ENCODE measurements at regions of chr5 and their contacts with region 1.

Region 1: DNA sequence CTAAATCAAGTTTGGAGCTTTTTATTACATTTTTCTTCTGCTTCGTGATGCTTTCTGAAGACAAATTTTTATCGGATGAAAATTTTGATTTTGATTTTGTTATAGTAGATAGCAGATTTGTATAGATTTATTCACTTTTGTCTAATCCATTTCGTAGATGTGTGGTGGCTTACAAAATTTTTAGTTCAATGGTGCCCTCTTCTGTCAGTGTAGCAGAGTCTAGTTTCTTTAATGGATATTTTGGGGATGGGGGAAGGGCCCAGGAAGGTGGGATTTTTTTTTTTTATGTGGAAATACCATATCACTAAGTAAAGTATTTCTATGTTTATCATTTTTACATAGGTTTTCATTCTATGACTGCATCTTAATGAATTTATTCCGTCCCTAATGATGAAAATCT is 259.9 kb upstream of the TARS1 start:
- DNase-seq: peak; percentile 56
- H3K4me3 Mint-ChIP-seq: no peak overlapping the region
- H3K27ac Mint-ChIP-seq: peak overlapping the region; percentile 31
- H3K4me1 Mint-ChIP-seq: no peaks in the 10 kb centered on the region
- H3K27me3 Mint-ChIP-seq: no peaks in the 10 kb centered on the region
- CTCF ChIP-seq: peak; percentile 68

Region 2: GRCh38 chr5:32613050-32613672 is 567.7 kb before region 1 on chr5:
- CTCF ChIA-PET with region 1: no interaction called
- POLR2A ChIA-PET with region 1: no interaction called
- intact Hi-C with region 1: loop called (anchors 10 kb)
- DNase-seq: peak; percentile 84
- H3K4me3 Mint-ChIP-seq: no peak overlapping the region
- H3K27ac Mint-ChIP-seq: no peak overlapping the region
- H3K4me1 Mint-ChIP-seq: peaks cover 9% of the 10 kb centered on the region
- H3K27me3 Mint-ChIP-seq: no peaks in the 10 kb centered on the region
- CTCF ChIP-seq: peak; percentile 84

Region 3: GRCh38 chr5:32709781-32710549 is 470.9 kb before region 1 on chr5:
- CTCF ChIA-PET with region 1: interaction called, 17 read pairs
- POLR2A ChIA-PET with region 1: no interaction called
- intact Hi-C with region 1: loop called (anchors 1 kb)
- DNase-seq: peak; percentile 79
- H3K4me3 Mint-ChIP-seq: peak overlapping the region; percentile 83
- H3K27ac Mint-ChIP-seq: peak overlapping the region; percentile 25
- H3K4me1 Mint-ChIP-seq: peaks cover 6% of the 10 kb centered on the region
- H3K27me3 Mint-ChIP-seq: no peaks in the 10 kb centered on the region
- CTCF ChIP-seq: peak; percentile 64

Region 4: DNA sequence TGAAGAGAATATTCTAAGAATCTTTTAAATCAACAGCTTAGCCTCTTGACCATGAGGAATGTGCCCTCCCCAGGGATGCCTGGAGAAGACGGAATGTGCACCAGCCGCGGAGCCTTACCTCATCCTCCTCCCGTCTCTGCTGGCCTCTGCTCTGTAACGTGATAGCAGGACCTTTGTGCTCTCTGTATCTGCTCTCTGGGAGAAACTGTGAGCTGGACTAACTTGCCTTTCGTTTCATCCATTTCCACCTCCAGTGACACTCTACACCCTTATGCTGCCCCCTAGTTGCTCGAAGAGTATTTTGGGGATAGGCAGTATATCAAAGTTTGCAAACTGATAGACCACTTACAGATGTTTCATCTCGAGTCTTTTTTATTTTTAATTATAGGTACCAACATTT is 328.4 kb before region 1 on chr5:
- CTCF ChIA-PET with region 1: no interaction called
- POLR2A ChIA-PET with region 1: no interaction called
- intact Hi-C with region 1: loop called (anchors 2 kb)
- DNase-seq: peak; percentile 76
- H3K4me3 Mint-ChIP-seq: no peak overlapping the region
- H3K27ac Mint-ChIP-seq: no peak overlapping the region
- H3K4me1 Mint-ChIP-seq: no peaks in the 10 kb centered on the region
- H3K27me3 Mint-ChIP-seq: no peaks in the 10 kb centered on the region
- CTCF ChIP-seq: no peak

Region 5: GRCh38 chr5:32955814-32956213 is 225.1 kb before region 1 on chr5:
- CTCF ChIA-PET with region 1: no interaction called
- POLR2A ChIA-PET with region 1: no interaction called
- intact Hi-C with region 1: no loop called
- DNase-seq: no peak
- H3K4me3 Mint-ChIP-seq: no peak overlapping the region
- H3K27ac Mint-ChIP-seq: no peak overlapping the region
- H3K4me1 Mint-ChIP-seq: peaks cover 6% of the 10 kb centered on the region
- H3K27me3 Mint-ChIP-seq: no peaks in the 10 kb centered on the region
- CTCF ChIP-seq: no peak

Region 6: DNA sequence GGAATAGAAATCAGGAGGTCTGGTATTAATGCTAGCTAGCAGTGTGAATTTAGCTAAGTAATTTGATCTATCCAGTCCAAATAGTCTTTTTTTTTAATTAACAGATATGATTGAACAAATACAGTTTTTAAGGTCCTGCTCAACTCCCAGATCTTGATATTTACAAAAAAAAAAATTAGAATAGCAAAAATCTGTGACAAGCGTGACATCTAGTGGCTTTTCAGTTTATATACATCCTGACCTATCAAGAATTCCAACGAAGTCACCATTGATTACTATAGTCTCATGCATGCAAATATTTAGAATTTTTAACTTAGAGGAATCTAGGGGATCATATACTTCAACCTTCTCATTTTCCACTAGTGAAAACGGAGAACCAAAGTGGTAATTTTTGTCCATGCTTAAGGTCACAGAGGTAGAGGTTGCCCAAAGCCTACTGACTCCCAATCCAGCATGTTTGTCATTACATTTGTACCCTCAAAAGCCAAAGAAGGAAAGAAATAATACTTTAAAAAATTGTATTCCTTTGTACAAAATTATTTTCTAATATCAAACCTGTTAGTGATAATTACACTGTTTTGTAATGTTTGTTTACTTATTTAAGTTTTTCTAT is 242.2 kb after region 1 on chr5:
- CTCF ChIA-PET with region 1: interaction called, 7 read pairs
- POLR2A ChIA-PET with region 1: no interaction called
- intact Hi-C with region 1: loop called (anchors 2 kb)
- DNase-seq: peak; percentile 49
- H3K4me3 Mint-ChIP-seq: no peak overlapping the region
- H3K27ac Mint-ChIP-seq: no peak overlapping the region
- H3K4me1 Mint-ChIP-seq: no peaks in the 10 kb centered on the region
- H3K27me3 Mint-ChIP-seq: no peaks in the 10 kb centered on the region
- CTCF ChIP-seq: peak; percentile 62

Measured in MCF 10A (cell line).